ENCODE measurements at regions of chr6 and their contacts with region 1.

Region 1: DNA sequence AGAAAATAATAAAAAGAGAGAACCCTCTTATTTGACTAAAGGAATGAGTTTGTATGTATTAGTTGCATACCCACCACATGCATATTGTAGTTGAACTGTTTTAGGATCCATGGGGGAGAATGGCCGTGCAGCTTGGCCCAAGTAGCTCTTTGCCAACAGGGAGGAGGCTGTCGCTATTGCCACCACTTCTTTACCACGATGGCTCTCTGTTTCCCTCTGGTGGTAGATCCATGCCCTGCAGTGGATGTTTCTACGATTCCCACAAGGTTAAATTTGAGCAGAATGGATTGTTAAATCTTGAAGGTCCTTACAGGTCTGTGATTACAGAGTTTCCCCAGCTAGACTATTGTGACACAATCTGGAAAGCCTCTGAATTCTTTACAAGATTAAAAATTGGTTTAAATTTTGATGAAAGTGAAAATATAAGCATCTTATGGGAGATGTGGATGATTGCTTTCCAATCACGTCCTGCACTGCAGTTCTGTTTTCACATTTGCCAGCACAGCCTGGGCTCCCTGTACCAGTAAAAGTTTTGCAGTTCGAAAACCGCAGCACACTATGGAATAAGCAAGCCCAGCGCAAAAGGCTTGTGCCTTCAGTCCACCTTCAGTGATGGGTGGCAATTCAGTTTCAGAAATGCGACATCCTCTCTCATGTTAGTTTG is 34.4 kb upstream of the FNDC1 start:
- DNase-seq: peak; percentile 68 to 78 (median 70)
- ATAC-seq: peak; percentile 89
- H3K4me3 ChIP-seq: no peak overlapping the region
- H3K27ac ChIP-seq: no peak overlapping the region
- H3K4me1 ChIP-seq: peaks cover 0 to 4% of the 10 kb centered on the region in 2 experiments; a peak in 1 of 5 replicates
- H3K27me3 ChIP-seq: peaks cover 41 to 61% of the 10 kb centered on the region in 2 experiments
- CTCF ChIP-seq: peak; percentile 93
- EP300 ChIP-seq: no peak
- POLR2A ChIP-seq: no peak
- RAD21 ChIP-seq: peak; percentile 88

Region 2: DNA sequence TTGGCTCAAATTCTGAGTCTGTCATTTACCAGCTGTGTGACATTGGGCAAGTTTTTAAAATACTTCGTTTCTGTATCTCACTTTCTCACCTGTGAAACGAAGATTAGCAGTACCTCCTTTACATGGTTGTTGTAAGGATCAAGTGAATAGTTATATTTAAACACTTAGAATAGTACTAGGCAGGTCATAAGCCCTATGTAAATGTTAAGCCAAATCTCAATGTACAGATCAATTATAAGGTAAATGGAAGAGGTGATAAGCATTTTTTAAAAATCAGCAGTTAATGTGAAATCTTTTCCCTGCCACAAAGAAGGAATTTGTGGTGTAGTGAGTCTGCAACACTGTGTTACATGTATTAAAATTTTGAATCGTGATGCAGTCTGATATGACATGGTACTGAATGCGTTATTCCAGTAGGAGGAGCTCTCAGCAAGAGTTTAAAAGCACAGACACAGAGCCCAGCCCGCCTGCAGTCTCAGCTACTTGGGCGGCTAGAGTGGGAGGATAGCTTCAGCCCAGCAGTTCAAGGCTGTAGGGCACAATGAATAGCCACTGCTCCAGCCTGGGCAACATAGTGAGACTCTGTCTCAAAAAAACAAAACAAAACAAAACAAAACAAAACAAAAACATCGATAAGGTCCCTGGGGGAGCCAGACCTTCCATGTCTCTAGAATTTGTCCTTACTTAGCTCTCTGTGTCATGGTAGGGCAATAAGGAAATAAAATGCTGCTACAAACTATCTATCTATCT is 920.7 kb before region 1 on chr6:
- CTCF ChIA-PET with region 1: interaction called, 3 read pairs
- POLR2A ChIA-PET with region 1: no interaction called
- in situ Hi-C with region 1: no loop called
- intact Hi-C with region 1: loop called (anchors 5 kb)
- DNase-seq: peak; percentile 56 to 87 (median 64)
- ATAC-seq: peak; percentile 100
- H3K4me3 ChIP-seq: no peak overlapping the region
- H3K27ac ChIP-seq: no peak overlapping the region
- H3K4me1 ChIP-seq: peaks cover 3% of the 10 kb centered on the region in 2 experiments; a peak in 2 of 5 replicates
- H3K27me3 ChIP-seq: no peaks in the 10 kb centered on the region
- CTCF ChIP-seq: peak; percentile 84 to 94 (median 89)
- EP300 ChIP-seq: no peak
- POLR2A ChIP-seq: no peak
- RAD21 ChIP-seq: peak; percentile 84 to 95

Region 3: DNA sequence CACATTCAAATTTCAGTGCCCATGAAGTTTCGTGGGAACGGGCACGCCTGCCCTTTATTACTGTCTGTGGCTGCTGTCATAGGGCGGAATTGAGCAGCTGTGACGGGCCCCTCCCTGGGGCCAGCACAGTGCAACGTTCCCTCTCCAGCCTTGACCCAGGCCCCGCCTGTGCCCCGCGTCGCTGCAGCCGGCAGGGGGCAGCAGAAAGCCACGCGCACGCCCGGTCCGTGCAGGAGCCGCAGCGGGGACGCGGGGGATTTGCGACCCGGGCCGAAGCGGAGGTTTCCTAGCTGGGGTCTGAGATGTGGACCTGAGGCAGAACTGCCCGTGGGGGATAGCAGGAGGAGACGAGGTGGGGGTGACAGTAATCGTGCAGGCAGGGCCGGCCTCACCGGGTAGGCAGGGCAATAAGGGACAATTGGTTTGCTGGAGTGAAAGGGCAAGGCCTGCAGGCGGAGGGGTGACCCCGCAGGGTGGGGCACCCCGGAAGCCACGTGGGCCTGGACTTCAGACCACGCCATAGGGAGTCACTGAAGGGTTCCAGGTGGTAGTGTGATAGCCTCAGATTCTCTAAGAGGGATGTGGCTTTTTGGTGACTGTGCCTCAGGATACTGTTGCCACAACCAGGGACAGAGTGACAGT is 430.5 kb before region 1 on chr6:
- CTCF ChIA-PET with region 1: interaction called, 3 read pairs
- POLR2A ChIA-PET with region 1: interaction called, 3 read pairs
- in situ Hi-C with region 1: no loop called
- intact Hi-C with region 1: loop called (anchors 10 kb)
- DNase-seq: peak; percentile 92 to 95 (median 94)
- ATAC-seq: peak; percentile 98
- H3K4me3 ChIP-seq: peak overlapping the region; percentile 36
- H3K27ac ChIP-seq: peak overlapping the region; percentile 45; the same call in 2 of the 3 replicates
- H3K4me1 ChIP-seq: peaks cover 26 to 35% of the 10 kb centered on the region in 2 experiments
- H3K27me3 ChIP-seq: peaks cover 0 to 15% of the 10 kb centered on the region in 2 experiments; a peak in 3 of 5 replicates
- CTCF ChIP-seq: peak; percentile 97 to 98 (median 97)
- EP300 ChIP-seq: no peak; the same call in 1 of the 2 replicates
- POLR2A ChIP-seq: no peak
- RAD21 ChIP-seq: peak; percentile 99

Region 4: DNA sequence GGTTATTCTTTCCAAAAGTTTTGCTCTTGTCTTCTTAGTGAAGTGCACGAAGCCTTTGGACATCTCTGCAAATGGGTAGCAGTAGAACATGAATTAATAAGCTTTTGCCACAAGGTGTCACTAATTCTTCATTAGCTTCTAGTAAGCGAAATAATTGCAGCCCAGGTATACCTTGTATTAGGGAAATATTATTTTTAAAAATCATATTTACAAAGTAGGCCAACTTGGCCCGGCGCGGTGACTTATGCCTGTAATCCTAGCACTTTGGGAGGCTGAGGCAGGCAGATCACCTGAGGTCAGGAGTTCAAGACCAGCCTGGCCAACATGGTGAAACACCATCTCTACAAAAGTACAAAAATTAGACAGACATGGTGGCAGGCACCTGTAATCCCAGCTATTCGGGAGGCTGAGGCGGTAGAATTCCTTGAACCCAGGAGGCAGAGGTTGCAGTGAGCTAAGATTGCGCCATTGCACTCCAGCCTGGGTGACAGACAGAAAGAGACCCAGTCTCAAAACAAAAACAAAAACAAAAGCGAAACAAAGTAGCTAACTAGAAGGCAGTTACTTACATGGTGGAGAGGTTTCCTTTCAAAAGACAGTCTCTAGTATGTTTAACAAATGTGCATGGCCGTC is 126.1 kb before region 1 on chr6:
- CTCF ChIA-PET with region 1: no interaction called
- POLR2A ChIA-PET with region 1: no interaction called
- in situ Hi-C with region 1: no loop called
- intact Hi-C with region 1: loop called (anchors 1 kb)
- DNase-seq: peak in 2 of 4 experiments; percentile 31 to 35
- ATAC-seq: peak; percentile 61
- H3K4me3 ChIP-seq: no peak overlapping the region
- H3K27ac ChIP-seq: no peak overlapping the region
- H3K4me1 ChIP-seq: peaks cover 7 to 8% of the 10 kb centered on the region in 2 experiments; a peak in 3 of 5 replicates
- H3K27me3 ChIP-seq: peaks cover 15 to 22% of the 10 kb centered on the region in 2 experiments; a peak in 3 of 5 replicates
- CTCF ChIP-seq: peak; percentile 46 to 70 (median 50); a peak in 4 of 6 replicates
- EP300 ChIP-seq: no peak
- POLR2A ChIP-seq: no peak
- RAD21 ChIP-seq: peak; percentile 65 to 72

Region 5: DNA sequence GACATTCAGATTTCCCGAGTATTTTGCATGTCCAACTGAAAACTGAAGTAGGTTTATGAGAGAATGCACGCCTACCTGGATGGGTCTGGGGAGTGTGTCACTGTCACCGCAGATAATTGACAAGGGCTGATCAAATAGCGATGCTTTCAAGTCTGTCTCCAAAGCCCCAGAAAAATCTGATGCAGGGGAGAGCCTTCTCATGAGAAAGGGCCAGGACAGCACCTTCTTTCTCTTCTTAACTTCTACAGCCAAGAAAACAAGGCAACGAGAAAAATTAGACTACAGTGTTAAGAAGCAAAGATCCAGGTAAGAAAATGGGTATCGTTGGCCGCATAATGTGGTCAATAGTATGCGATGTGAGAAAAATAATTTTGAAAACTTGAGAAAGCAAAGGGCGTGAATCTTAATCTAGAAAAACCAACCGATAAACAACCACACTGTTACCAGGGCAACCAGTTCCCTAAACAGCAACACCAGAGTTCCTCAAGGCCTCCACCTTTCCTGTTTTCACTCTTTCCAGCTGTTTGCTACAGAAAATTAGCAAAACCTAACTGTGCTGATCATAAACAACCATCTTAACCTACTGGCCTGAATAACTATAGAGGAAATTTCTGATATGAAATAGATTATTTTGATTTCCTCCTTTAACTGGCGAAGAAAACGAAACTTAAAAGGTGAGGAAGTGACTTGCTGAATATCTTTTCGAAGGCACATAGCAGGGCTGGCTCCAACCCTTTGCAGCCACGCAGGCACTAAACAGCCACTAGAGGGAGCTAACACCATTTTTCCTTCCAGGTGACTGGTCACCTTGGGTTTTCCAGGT is 92.6 kb before region 1 on chr6:
- CTCF ChIA-PET with region 1: interaction called, 7 read pairs
- POLR2A ChIA-PET with region 1: no interaction called
- in situ Hi-C with region 1: no loop called
- intact Hi-C with region 1: loop called (anchors 1 kb)
- DNase-seq: peak; percentile 76 to 86 (median 82)
- ATAC-seq: peak; percentile 97
- H3K4me3 ChIP-seq: no peak overlapping the region
- H3K27ac ChIP-seq: no peak overlapping the region
- H3K4me1 ChIP-seq: no peaks in the 10 kb centered on the region
- H3K27me3 ChIP-seq: peaks cover 53 to 59% of the 10 kb centered on the region in 2 experiments
- CTCF ChIP-seq: peak; percentile 90 to 98 (median 97)
- EP300 ChIP-seq: no peak
- POLR2A ChIP-seq: no peak
- RAD21 ChIP-seq: peak; percentile 76 to 87

Region 6: GRCh38 chr6:159473475-159474263 is 338.8 kb after region 1 on chr6:
- CTCF ChIA-PET with region 1: no interaction called
- POLR2A ChIA-PET with region 1: no interaction called
- in situ Hi-C with region 1: no loop called
- intact Hi-C with region 1: no loop called
- DNase-seq: no peak
- ATAC-seq: no peak
- H3K4me3 ChIP-seq: no peak overlapping the region
- H3K27ac ChIP-seq: no peak overlapping the region
- H3K4me1 ChIP-seq: no peaks in the 10 kb centered on the region
- H3K27me3 ChIP-seq: no peaks in the 10 kb centered on the region
- CTCF ChIP-seq: no peak
- EP300 ChIP-seq: no peak
- POLR2A ChIP-seq: no peak
- RAD21 ChIP-seq: no peak